Heart left ventricle (tissue), 16 donors: ENCODE measurements at regions of chr16 and their contacts with region 1.

Region 1: GRCh38 chr16:49855280-49855821 is 561 bp downstream of the ZNF423 start:
- DNase-seq: peak; percentile 91 to 93 (median 91)
- ATAC-seq: peak; percentile 65 to 83 (median 72)
- H3K4me3 ChIP-seq: peak overlapping the region; percentile 36 to 94 (median 76)
- H3K27ac ChIP-seq: peak overlapping the region; percentile 84 to 99 (median 94)
- H3K4me1 ChIP-seq: peaks cover 0 to 64% (median 36%) of the 10 kb centered on the region in 12 donors
- H3K27me3 ChIP-seq: peaks cover 0 to 41% (median 0%) of the 10 kb centered on the region in 9 donors
- CTCF ChIP-seq: no peak
- POLR2A ChIP-seq: peak in 1 of 2 donors; percentile 72

Region 2: GRCh38 chr16:49441366-49441780 is 414.0 kb before region 1 on chr16:
- intact Hi-C with region 1: loop called in 1 of 10 experiments (anchors 5 kb)
- DNase-seq: peak; percentile 45 to 79 (median 71)
- ATAC-seq: peak; percentile 67 to 96 (median 72)
- H3K4me3 ChIP-seq: peak overlapping the region in 6 of 12 donors; percentile 8 to 38 (median 17)
- H3K27ac ChIP-seq: peak overlapping the region in 10 of 12 donors; percentile 35 to 84 (median 60)
- H3K4me1 ChIP-seq: peaks cover 0 to 21% (median 16%) of the 10 kb centered on the region in 12 donors
- H3K27me3 ChIP-seq: peaks cover 0 to 6% (median 0%) of the 10 kb centered on the region in 9 donors
- CTCF ChIP-seq: peak in 9 of 12 donors; percentile 23 to 56 (median 42)
- POLR2A ChIP-seq: no peak

Region 3: DNA sequence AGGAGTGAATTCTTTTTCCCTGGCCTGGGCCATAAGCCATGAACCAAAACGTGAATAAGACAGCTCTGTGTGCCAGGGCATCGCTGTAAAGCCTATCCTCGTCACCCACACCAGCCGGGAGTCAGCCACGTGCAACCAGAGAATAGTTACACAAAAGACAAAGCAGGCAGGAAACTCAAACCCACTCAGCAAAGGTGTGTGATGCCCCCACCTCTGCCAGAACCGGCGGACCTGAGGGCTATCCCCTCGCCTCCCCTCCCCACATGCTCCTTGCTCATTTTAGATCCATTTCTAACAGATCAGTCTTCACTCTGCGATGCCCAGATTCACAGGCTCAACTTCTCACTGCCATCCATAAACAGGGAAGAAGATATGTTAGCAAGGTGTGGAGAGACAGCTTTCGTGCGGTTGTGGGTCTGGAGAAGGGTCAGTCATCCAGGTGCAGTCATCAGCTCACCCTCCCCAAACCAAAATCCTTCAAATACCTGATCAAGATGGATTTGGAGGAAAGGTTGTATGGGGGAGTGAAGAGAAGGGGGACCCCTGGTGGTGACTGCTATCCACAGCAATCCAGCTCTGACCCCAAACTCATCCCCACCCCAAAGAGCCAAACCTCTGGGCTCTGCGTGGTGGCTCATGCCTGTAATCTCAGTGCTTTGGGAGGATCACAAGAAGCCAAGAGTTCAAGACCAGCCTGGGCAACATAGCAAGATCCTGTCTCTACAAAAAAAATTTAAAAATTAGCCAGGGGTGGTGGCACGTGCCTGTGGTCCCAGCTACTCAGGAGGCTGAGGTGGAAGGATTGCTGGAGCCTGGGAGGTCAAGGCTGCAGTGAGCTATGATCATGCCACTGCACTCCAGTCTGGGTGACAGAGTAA is 262.6 kb before region 1 on chr16:
- intact Hi-C with region 1: loop called in 2 of 10 experiments (anchors 5 to 10 kb)
- DNase-seq: peak in 1 of 5 donors; percentile 28
- ATAC-seq: peak in 3 of 4 donors; percentile 49 to 58 (median 56)
- H3K4me3 ChIP-seq: no peak overlapping the region
- H3K27ac ChIP-seq: no peak overlapping the region
- H3K4me1 ChIP-seq: peaks cover 0 to 28% (median 11%) of the 10 kb centered on the region in 12 donors
- H3K27me3 ChIP-seq: peaks cover 0 to 2% (median 0%) of the 10 kb centered on the region in 9 donors
- CTCF ChIP-seq: peak; percentile 63 to 84 (median 75)
- POLR2A ChIP-seq: no peak

Region 4: GRCh38 chr16:49639739-49640431 is 215.5 kb before region 1 on chr16:
- intact Hi-C with region 1: loop called in 1 of 10 experiments (anchors 5 kb)
- DNase-seq: peak; percentile 63 to 85 (median 73)
- ATAC-seq: peak; percentile 43 to 82 (median 65)
- H3K4me3 ChIP-seq: peak overlapping the region in 1 of 12 donors; percentile 26
- H3K27ac ChIP-seq: peak overlapping the region in 11 of 12 donors; percentile 10 to 69 (median 63)
- H3K4me1 ChIP-seq: peaks cover 2 to 48% (median 32%) of the 10 kb centered on the region in 12 donors
- H3K27me3 ChIP-seq: no peaks in the 10 kb centered on the region
- CTCF ChIP-seq: no peak
- POLR2A ChIP-seq: no peak

Region 5: GRCh38 chr16:49755313-49755620 is 100.1 kb before region 1 on chr16:
- intact Hi-C with region 1: loop called in 8 of 10 experiments (anchors 2 to 10 kb)
- DNase-seq: peak in 1 of 5 donors; percentile 30
- ATAC-seq: peak; percentile 26 to 82 (median 64)
- H3K4me3 ChIP-seq: peak overlapping the region in 11 of 12 donors; percentile 19 to 55 (median 46)
- H3K27ac ChIP-seq: peak overlapping the region in 11 of 12 donors; percentile 52 to 92 (median 85)
- H3K4me1 ChIP-seq: peaks cover 0 to 45% (median 23%) of the 10 kb centered on the region in 12 donors
- H3K27me3 ChIP-seq: peaks cover 0 to 4% (median 0%) of the 10 kb centered on the region in 9 donors
- CTCF ChIP-seq: peak; percentile 19 to 72 (median 58)
- POLR2A ChIP-seq: no peak

Region 6: DNA sequence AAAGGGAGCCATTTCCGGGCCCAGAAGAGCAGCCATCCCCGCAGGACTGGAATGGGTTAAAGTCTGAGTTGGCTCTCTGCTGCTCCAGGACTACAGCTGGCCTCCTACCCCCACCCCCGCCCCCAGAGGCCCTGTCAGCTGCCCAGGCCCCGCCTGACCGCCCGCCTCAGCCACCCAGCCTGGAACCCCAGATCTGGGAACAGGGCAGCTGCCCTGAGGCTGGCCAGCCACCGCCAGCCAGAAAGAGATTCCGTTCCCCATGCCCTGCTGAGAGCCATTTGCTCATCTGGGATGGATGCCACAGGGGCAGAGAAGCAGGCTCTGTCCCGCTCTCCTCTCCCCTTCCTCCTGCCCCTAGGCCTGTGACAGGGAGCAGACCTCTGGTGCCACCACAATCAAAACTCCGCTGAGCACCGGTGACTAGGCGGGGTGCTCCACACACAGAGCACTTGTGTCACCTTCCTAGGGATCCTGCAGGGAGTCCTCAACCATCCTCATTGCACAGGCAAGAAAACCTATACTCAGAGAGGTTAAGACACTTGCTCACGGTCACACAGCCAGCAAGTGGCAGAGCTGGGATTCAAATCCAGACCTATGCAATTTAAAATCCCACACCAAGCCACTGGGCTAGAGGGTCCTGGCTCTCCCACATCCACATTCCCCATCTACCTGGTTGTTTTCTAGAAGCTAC is 43.6 kb before region 1 on chr16:
- intact Hi-C with region 1: no loop called
- DNase-seq: peak in 1 of 5 donors; percentile 46
- ATAC-seq: peak; percentile 54 to 84 (median 66)
- H3K4me3 ChIP-seq: no peak overlapping the region
- H3K27ac ChIP-seq: peak overlapping the region in 1 of 12 donors; percentile 38
- H3K4me1 ChIP-seq: peaks cover 0 to 36% (median 12%) of the 10 kb centered on the region in 12 donors
- H3K27me3 ChIP-seq: no peaks in the 10 kb centered on the region
- CTCF ChIP-seq: no peak
- POLR2A ChIP-seq: no peak

Region 7: DNA sequence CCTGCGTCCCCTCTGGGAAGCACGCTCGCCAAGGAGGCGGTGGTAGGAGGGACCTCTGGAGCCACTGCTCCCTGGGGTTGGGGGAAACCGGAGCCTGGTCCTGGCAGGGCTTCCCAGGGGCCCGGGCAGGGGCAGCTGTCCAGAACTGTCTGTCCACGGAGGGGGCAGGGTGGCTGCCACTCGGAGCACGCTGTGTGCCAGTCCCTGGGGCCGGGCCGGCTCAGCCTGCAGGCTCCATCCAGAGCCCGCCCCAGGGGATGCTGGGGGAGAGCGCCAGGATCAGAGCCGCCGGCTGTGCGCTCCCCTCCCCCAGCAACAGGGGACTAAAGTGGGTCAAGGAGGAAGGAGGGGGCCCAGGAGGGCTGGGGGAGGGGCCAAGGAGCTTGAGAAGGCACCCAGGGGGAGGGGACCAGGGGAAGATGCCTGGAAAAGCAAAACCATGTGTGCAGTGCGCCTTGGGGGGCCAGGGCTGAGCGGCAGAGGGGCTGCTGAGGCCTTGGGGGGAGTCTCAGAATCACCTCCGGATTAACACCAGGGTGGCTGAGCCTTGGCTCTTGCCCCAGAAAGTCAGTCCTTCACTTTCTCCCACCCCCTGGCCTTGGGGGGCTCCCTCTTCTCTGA is 20.7 kb before region 1 on chr16:
- intact Hi-C with region 1: loop called in 4 of 10 experiments (anchors 1 to 2 kb)
- DNase-seq: peak in 4 of 5 donors; percentile 71 to 88 (median 80)
- ATAC-seq: peak; percentile 41 to 69 (median 60)
- H3K4me3 ChIP-seq: peak overlapping the region in 1 of 12 donors; percentile 15
- H3K27ac ChIP-seq: peak overlapping the region; percentile 66 to 89 (median 84)
- H3K4me1 ChIP-seq: peaks cover 5 to 84% (median 65%) of the 10 kb centered on the region in 12 donors
- H3K27me3 ChIP-seq: peaks cover 0 to 15% (median 0%) of the 10 kb centered on the region in 9 donors
- CTCF ChIP-seq: no peak
- POLR2A ChIP-seq: no peak

Region 8: DNA sequence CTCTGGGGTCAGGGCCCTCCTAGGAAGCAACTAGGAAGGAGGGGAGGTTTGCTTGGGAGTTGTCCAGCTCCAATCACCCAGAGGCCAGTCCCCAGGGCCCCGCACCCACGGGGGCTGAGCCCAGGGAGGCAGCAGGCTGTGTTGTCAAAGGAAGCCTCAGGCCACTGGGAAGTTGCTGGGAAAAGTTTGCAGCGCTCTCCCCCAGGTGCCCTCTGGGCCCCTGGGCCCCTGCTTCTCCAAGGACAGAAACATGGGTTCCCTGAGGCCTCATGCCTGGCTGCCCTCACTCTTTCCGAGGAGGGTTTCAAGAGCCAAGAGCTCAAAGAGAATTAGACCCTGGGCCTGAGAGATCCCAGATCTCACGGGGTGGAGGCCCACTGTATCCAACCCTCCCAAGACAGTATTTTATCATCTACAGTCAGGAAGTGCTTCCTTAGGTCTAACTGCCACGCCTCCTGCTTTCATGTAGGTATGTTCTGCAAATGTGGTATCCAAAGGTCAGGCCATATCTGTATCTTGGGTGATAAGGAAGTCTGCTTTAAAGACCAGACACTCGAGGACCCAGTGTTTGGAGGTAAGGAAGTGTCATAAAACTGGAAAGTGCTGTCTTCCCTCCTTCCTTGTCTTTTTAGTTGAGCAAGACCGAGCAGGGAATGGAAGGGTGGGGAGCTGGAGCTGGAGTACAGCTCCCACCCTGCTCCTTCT is 44.8 kb after region 1 on chr16:
- intact Hi-C with region 1: no loop called
- DNase-seq: no peak
- ATAC-seq: no peak
- H3K4me3 ChIP-seq: no peak overlapping the region
- H3K27ac ChIP-seq: no peak overlapping the region
- H3K4me1 ChIP-seq: no peaks in the 10 kb centered on the region
- H3K27me3 ChIP-seq: peaks cover 0 to 9% (median 0%) of the 10 kb centered on the region in 9 donors
- CTCF ChIP-seq: no peak
- POLR2A ChIP-seq: no peak

Region 9: DNA sequence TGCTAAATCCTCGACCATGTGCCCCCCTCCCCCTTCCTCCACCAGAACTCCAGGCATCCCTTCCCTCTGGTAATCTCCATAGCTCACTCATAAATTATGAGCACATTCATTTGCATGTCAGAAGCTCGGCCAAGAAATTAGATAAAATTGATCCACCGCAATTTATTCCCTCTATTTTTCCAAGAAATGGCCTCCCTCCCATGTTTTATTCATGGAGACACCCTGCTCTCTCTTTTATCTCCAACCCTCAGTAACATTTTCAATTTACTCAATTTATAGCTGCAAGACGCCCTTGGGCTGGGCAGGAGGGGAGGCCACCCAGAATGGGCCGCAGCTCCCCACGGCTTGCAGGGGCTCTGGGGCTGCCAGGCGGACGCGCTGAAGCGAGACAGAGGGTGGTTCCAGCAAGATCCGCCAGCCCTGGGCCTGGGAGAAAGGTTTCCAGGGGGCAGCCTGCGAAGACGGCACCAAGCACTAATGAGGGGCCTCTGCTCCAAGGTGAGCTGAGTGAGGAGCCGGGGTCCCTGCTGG is 55.3 kb after region 1 on chr16:
- intact Hi-C with region 1: no loop called
- DNase-seq: no peak
- ATAC-seq: no peak
- H3K4me3 ChIP-seq: no peak overlapping the region
- H3K27ac ChIP-seq: no peak overlapping the region
- H3K4me1 ChIP-seq: no peaks in the 10 kb centered on the region
- H3K27me3 ChIP-seq: peaks cover 0 to 8% (median 0%) of the 10 kb centered on the region in 9 donors
- CTCF ChIP-seq: no peak
- POLR2A ChIP-seq: no peak